Brain microvascular endothelial cell (primary cell): ENCODE measurements at regions of chr2 and their contacts with region 1.

Region 1: GRCh38 chr2:19362755-19363473 is 4.5 kb upstream of the OSR1 start:
- DNase-seq: peak; percentile 81
- H3K4me3 ChIP-seq: peak overlapping the region; percentile 66
- H3K27ac ChIP-seq: peak overlapping the region; percentile 38
- H3K27me3 ChIP-seq: no peaks in the 10 kb centered on the region
- CTCF ChIP-seq: peak; percentile 86

Region 2: GRCh38 chr2:18520451-18521425 is 842.2 kb before region 1 on chr2:
- in situ Hi-C with region 1: loop called (anchors 10 kb)
- DNase-seq: peak; percentile 88
- H3K4me3 ChIP-seq: no peak overlapping the region
- H3K27ac ChIP-seq: no peak overlapping the region
- H3K27me3 ChIP-seq: no peaks in the 10 kb centered on the region
- CTCF ChIP-seq: peak; percentile 93

Region 3: DNA sequence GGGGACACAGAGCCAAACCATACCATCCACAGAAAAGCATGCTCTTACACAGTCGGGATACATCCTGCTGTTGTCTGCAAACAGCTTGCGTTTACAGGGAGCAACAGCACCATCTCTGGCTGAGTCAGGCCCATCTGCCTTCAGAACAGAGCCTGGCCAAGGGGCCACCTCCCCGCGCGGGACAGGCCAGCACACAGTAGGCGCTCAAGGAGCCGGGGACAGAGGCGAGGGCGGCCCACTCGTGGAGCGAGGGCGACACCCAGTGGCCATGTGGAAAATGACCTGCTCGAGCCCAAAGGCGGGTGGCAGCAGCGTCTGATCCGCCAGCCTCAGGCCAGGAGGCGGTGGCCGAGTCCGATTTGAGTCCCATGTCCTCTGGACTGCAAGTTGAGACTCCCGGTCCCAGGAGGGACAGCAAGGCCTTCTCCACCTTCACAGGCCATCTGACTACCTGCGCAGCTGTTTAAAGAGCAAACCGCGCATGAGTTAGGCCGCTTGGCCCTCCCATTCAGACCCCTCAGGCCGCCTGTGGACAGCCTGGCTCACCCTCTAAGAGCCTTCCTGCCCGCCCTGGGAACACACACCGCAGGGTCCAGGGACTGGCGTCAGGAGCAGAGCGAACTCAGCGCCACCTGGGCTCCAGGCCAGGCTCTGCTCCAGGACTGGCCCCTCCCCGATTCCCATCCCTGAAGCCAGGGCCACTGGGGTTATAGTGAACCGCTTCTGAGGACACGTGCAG is 500.6 kb after region 1 on chr2:
- in situ Hi-C with region 1: loop called (anchors 25 kb)
- DNase-seq: peak; percentile 31
- H3K4me3 ChIP-seq: peak overlapping the region; percentile 30
- H3K27ac ChIP-seq: no peak overlapping the region
- H3K27me3 ChIP-seq: no peaks in the 10 kb centered on the region
- CTCF ChIP-seq: peak; percentile 89